Mammary epithelial cell (primary cell): ENCODE measurements at regions of chr6 and their contacts with region 1.

Region 1: GRCh38 chr6:166382933-166383801 is at the start of gene MPC1:
- DNase-seq: peak; percentile 97
- H3K4me3 ChIP-seq: peak within 1 kb of the TSS; percentile 72 to 91 (median 86)
- H3K27ac ChIP-seq: peak within 1 kb of the TSS; percentile 66
- H3K4me1 ChIP-seq: peaks cover 3% of the 10 kb centered on the region
- H3K27me3 ChIP-seq: no peaks in the 10 kb centered on the region
- CTCF ChIP-seq: no peak
- total RNA-seq, gene MPC1: 21.5 to 24.8 TPM

Region 2: DNA sequence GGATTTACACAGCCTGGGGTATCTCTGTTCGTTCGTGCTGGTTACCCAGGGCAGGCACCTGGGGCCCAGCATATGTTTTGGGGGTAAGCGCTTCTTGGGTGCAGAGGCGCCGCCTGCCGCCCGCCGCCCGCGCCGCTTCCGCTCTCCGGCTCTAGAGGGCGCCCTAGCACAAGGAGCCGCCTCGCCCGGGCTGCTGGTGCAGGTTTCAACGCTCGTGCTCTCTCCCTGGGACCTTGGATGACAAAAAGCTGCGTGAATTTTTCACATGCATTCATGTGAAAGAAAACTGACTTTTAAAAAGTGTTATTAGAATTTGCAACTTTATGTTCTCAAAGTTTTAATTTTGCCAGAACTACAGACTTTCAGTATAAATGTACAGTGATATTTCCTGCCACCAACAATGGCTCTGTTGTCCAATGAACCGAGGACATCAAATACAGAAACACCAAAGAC is 107.4 kb before region 1 on chr6:
- CTCF ChIA-PET with region 1: interaction called, 3 read pairs
- dilution Hi-C with region 1: no loop called
- in situ Hi-C with region 1: loop called in 1 of 2 experiments (anchors 25 kb)
- intact Hi-C with region 1: loop called (anchors 1 kb)
- DNase-seq: peak; percentile 37
- H3K4me3 ChIP-seq: no peak overlapping the region
- H3K27ac ChIP-seq: no peak overlapping the region
- H3K4me1 ChIP-seq: peaks cover 3% of the 10 kb centered on the region
- H3K27me3 ChIP-seq: no peaks in the 10 kb centered on the region
- CTCF ChIP-seq: peak; percentile 69 to 99

Region 3: GRCh38 chr6:166342349-166343149 is 40.6 kb before region 1 on chr6 and contains the start of gene SFT2D1:
- CTCF ChIA-PET with region 1: no interaction called
- dilution Hi-C with region 1: no loop called
- in situ Hi-C with region 1: no loop called
- intact Hi-C with region 1: loop called (anchors 1 kb)
- DNase-seq: peak; percentile 71
- H3K4me3 ChIP-seq: peak within 1 kb of the TSS; percentile 71 to 99 (median 82)
- H3K27ac ChIP-seq: peak within 1 kb of the TSS; percentile 76
- H3K4me1 ChIP-seq: peaks cover 10% of the 10 kb centered on the region
- H3K27me3 ChIP-seq: no peaks in the 10 kb centered on the region
- CTCF ChIP-seq: no peak
- total RNA-seq, gene SFT2D1: 31.0 to 41.1 TPM

Region 4: GRCh38 chr6:166360243-166361076 is 22.7 kb before region 1 on chr6:
- CTCF ChIA-PET with region 1: interaction called, 4 read pairs
- dilution Hi-C with region 1: no loop called
- in situ Hi-C with region 1: no loop called
- intact Hi-C with region 1: loop called (anchors 2 kb)
- DNase-seq: peak; percentile 59
- H3K4me3 ChIP-seq: peak overlapping the region in 2 of 3 experiments; percentile 16 to 19
- H3K27ac ChIP-seq: peak overlapping the region; percentile 19
- H3K4me1 ChIP-seq: peaks cover 15% of the 10 kb centered on the region
- H3K27me3 ChIP-seq: no peaks in the 10 kb centered on the region
- CTCF ChIP-seq: no peak

Region 5: GRCh38 chr6:166999145-166999883 is 616.1 kb after region 1 on chr6 and contains the start of gene CEP43:
- CTCF ChIA-PET with region 1: no interaction called
- dilution Hi-C with region 1: no loop called
- in situ Hi-C with region 1: no loop called
- intact Hi-C with region 1: loop called (anchors 2 kb)
- DNase-seq: peak; percentile 94
- H3K4me3 ChIP-seq: peak within 1 kb of the TSS; percentile 88 to 98 (median 91)
- H3K27ac ChIP-seq: peak within 1 kb of the TSS; percentile 76
- H3K4me1 ChIP-seq: peaks cover 14% of the 10 kb centered on the region
- H3K27me3 ChIP-seq: no peaks in the 10 kb centered on the region
- CTCF ChIP-seq: no peak
- total RNA-seq, gene CEP43: 16.3 to 17.3 TPM